Dorsolateral prefrontal cortex (tissue), 120 donors: ENCODE measurements at regions of chr2 and their contacts with region 1.

Region 1: DNA sequence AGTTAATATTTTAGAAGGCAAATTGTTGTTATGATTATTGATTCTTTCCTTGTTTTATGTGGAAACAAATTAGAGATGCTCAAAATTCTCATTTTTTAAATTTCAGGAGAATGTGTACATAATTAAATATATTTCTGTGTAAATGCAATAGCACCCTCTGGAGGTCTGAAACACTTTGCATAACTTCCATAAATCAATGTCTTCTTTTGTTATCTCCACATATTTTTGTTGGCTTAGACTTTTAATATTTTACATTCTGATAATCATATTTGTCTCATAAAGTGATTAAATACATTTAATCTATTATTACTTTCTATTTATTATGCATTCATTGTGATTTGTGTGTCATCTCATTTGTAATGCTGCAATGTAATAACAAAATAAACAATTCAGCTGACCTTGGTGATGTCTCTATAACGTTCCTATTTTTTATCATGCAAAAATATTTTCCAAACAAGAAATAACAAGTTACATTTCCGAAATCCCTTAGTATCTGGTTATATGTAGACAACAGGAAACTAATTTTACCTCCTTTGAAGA is 201.8 kb upstream of the GALNT5 start:
- DNase-seq: no peak
- H3K4me3 ChIP-seq: peak overlapping the region in 32 of 59 donors; percentile 1 to 47 (median 20)
- H3K27ac ChIP-seq: peak overlapping the region in 51 of 59 donors; percentile 3 to 87 (median 66)
- H3K27me3 ChIP-seq: no peaks in the 10 kb centered on the region
- CTCF ChIP-seq: peak; percentile 54 to 90 (median 70)

Region 2: GRCh38 chr2:157087373-157088002 is 31.8 kb after region 1 on chr2:
- intact Hi-C with region 1: no loop called
- DNase-seq: peak in 2 of 10 donors; percentile 9 to 36
- H3K4me3 ChIP-seq: no peak overlapping the region
- H3K27ac ChIP-seq: no peak overlapping the region
- H3K27me3 ChIP-seq: no peaks in the 10 kb centered on the region
- CTCF ChIP-seq: no peak

Region 3: GRCh38 chr2:157194097-157194688 is 138.5 kb after region 1 on chr2:
- intact Hi-C with region 1: loop called in 1 of 2 experiments (anchors 10 kb)
- DNase-seq: peak in 2 of 10 donors; percentile 37 to 44
- H3K4me3 ChIP-seq: no peak overlapping the region
- H3K27ac ChIP-seq: no peak overlapping the region
- H3K27me3 ChIP-seq: peaks cover 0 to 4% (median 0%) of the 10 kb centered on the region in 45 donors
- CTCF ChIP-seq: peak; percentile 62 to 98 (median 78)

Region 4: GRCh38 chr2:157302492-157303099 is 246.9 kb after region 1 on chr2:
- intact Hi-C with region 1: no loop called
- DNase-seq: peak in 1 of 10 donors; percentile 38
- H3K4me3 ChIP-seq: peak overlapping the region in 14 of 59 donors; percentile 8 to 52 (median 21)
- H3K27ac ChIP-seq: peak overlapping the region in 10 of 59 donors; percentile 14 to 80 (median 37)
- H3K27me3 ChIP-seq: peaks cover 0 to 8% (median 0%) of the 10 kb centered on the region in 45 donors
- CTCF ChIP-seq: peak; percentile 77 to 99 (median 90)